Right cardiac atrium (tissue), 5 donors: ENCODE measurements at regions of chr3 and their contacts with region 1.

Region 1: DNA sequence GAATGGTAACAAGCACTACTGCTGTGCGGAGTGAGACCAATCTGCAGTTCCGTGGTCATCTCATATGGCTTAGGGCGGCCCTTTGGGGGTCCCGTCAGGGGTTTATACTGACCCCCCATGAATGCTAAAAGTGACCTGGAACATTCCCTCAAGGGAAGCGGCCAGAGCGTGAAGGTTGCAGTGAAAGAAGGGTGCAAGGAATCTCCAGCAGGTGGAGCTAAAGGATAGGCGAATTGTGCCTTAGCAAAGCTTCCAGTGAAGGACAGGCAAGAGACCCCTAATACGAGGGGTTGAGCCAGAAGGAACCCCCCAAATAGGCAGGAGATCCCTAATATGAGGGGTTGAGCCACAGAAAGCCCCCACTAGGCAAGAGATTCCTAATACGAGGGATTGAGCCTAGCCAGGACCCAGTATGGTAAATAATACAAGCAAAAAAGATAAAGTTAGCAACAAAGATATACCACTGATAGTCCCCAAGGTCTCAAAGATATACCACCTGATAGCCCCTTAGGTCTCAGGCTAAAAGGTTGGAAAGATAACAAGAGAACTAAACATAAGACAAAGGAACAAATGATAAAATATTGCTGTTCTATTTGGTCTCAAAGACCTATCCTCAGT is 32.8 kb downstream of the ZNF589 start:
- DNase-seq: peak in 1 of 3 donors; percentile 51
- ATAC-seq: peak; percentile 36 to 50
- H3K4me3 ChIP-seq: no peak overlapping the region
- H3K27ac ChIP-seq: no peak overlapping the region
- H3K4me1 ChIP-seq: no peaks in the 10 kb centered on the region
- H3K27me3 ChIP-seq: no peaks in the 10 kb centered on the region

Region 2: DNA sequence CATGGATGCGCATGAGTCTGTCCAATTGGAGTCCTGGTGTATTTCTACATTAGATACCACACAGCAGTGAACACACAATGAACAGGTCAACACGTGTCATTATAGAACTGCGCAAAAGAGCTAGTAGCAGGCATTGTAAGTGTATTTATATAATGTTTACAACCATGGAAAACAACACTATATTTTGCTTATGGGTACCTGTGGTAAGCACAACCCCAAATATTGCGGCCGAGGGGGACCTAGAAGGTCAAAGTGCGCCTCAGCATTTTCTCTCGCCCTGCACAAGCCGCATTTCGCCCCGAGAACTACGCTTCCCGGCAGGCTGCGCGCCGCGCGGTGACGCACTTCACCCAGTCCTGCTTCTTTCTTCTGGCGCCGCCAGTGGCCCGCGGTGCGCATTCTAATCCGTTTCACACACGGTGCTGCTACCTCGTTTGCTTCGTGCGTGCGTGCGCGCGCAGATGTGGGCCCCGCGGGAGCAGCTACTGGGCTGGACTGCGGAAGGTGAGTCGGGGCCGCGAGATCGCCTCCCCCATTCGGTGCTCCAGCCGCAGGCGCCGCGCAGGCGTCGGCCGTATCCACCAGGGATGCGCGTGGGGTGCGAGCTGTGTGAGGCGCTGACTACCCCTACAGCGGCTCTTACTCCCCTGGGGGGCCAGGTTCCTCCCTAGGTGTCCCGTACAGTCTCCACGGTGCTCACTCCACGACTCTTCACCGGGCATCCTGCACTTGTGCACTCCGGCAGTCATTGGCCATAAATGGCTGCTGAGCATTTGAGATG is 32.8 kb before region 1 on chr3 and contains the start of gene ZNF589:
- intact Hi-C with region 1: no loop called
- DNase-seq: peak; percentile 93 to 97 (median 94)
- ATAC-seq: peak; percentile 96
- H3K4me3 ChIP-seq: peak within 1 kb of the TSS; percentile 56
- H3K27ac ChIP-seq: peak within 1 kb of the TSS; percentile 89
- H3K4me1 ChIP-seq: peaks cover 5% of the 10 kb centered on the region
- H3K27me3 ChIP-seq: no peaks in the 10 kb centered on the region
- total RNA-seq, gene ZNF589: 11.4 to 18.5 (median 15.0) TPM

Region 3: GRCh38 chr3:48429960-48430707 is 156.4 kb after region 1 on chr3 and contains the start of gene PLXNB1:
- intact Hi-C with region 1: loop called in 3 of 4 experiments (anchors 2 to 5 kb)
- DNase-seq: peak; percentile 59 to 81 (median 74)
- ATAC-seq: peak in 1 of 2 donors; percentile 10
- H3K4me3 ChIP-seq: peak within 1 kb of the TSS; percentile 90
- H3K27ac ChIP-seq: peak within 1 kb of the TSS; percentile 86
- H3K4me1 ChIP-seq: peaks cover 15% of the 10 kb centered on the region
- H3K27me3 ChIP-seq: no peaks in the 10 kb centered on the region
- total RNA-seq, gene PLXNB1: 49.4 to 84.5 (median 55.0) TPM

Region 4: DNA sequence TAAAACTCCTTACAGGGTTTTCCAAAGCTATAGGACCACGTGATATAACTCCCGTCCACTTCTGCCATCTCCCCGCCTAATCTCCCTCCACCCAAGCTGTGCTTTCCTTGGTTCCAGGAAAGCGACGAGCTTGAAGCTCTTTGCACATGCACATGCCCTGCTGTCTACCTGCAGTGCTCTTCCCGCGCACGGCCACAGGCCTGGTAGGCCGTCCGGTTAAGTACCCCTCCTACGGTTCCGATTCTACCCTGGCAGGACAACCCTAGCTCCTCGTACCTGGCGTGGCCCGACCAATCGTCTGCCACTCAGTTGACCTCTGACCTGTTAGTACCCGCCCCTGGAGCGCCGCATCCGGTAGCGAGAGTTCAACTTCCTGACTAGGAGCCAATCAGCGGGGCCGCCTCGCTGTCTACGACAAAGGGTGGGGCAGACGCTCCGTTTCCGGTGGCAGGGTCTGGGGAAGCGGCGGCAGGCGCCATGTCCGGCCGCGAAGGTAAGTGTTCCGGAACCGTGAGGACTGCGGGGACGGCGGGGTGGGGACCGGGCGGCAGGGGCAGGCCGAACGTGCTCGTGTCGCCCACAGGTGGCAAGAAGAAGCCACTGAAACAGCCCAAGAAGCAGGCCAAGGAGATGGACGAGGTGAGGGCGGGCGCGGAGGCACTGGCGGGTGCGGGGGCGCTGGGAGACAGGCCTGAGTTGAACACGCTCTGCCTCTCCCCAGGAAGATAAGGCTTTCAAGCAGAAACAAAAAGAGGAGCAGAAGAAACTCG is 166.3 kb after region 1 on chr3 and contains the starts of genes CCDC51 and TMA7:
- intact Hi-C with region 1: loop called in 3 of 4 experiments (anchors 2 to 5 kb)
- DNase-seq: peak; percentile 99
- ATAC-seq: peak; percentile 98
- H3K4me3 ChIP-seq: peak within 1 kb of the TSS; percentile 49
- H3K27ac ChIP-seq: peak within 1 kb of the TSS; percentile 89
- H3K4me1 ChIP-seq: no peaks in the 10 kb centered on the region
- H3K27me3 ChIP-seq: no peaks in the 10 kb centered on the region
- total RNA-seq, gene CCDC51: 8.7 to 11.5 (median 11.1) TPM
- total RNA-seq, gene TMA7: 187 to 270 (median 216) TPM

Region 5: GRCh38 chr3:48548729-48549705 is 275.3 kb after region 1 on chr3:
- intact Hi-C with region 1: loop called in 3 of 4 experiments (anchors 10 kb)
- DNase-seq: peak; percentile 87 to 95 (median 94)
- ATAC-seq: peak; percentile 91 to 92
- H3K4me3 ChIP-seq: no peak overlapping the region
- H3K27ac ChIP-seq: no peak overlapping the region
- H3K4me1 ChIP-seq: no peaks in the 10 kb centered on the region
- H3K27me3 ChIP-seq: no peaks in the 10 kb centered on the region